IMR-90 (cell line): ENCODE measurements at regions of chr2 and their contacts with region 1.

Region 1: GRCh38 chr2:137838255-137839092 is 125.8 kb upstream of the HNMT start:
- DNase-seq: peak; percentile 49
- ATAC-seq: peak; percentile 83
- H3K4me3 ChIP-seq: no peak overlapping the region
- H3K27ac ChIP-seq: no peak overlapping the region
- H3K4me1 ChIP-seq: no peaks in the 10 kb centered on the region
- H3K27me3 ChIP-seq: no peaks in the 10 kb centered on the region
- CTCF ChIP-seq: peak; percentile 69
- POLR2A ChIP-seq: no peak
- RAD21 ChIP-seq: peak; percentile 81

Region 2: GRCh38 chr2:136423516-136423996 is 1414.9 kb before region 1 on chr2:
- CTCF ChIA-PET with region 1: no interaction called
- POLR2A ChIA-PET with region 1: no interaction called
- dilution Hi-C with region 1: no loop called
- in situ Hi-C with region 1: loop called (anchors 5 kb)
- intact Hi-C with region 1: loop called (anchors 1 kb)
- DNase-seq: peak; percentile 47
- ATAC-seq: peak; percentile 100
- H3K4me3 ChIP-seq: peak overlapping the region; percentile 58
- H3K27ac ChIP-seq: no peak overlapping the region
- H3K4me1 ChIP-seq: no peaks in the 10 kb centered on the region
- H3K27me3 ChIP-seq: no peaks in the 10 kb centered on the region; the same call in 1 of the 2 replicates
- CTCF ChIP-seq: peak; percentile 73
- POLR2A ChIP-seq: no peak
- RAD21 ChIP-seq: peak; percentile 56

Region 3: GRCh38 chr2:137467246-137467862 is 371.1 kb before region 1 on chr2:
- CTCF ChIA-PET with region 1: no interaction called
- POLR2A ChIA-PET with region 1: no interaction called
- dilution Hi-C with region 1: no loop called
- in situ Hi-C with region 1: no loop called
- intact Hi-C with region 1: loop called (anchors 5 kb)
- DNase-seq: no peak
- ATAC-seq: no peak
- H3K4me3 ChIP-seq: no peak overlapping the region
- H3K27ac ChIP-seq: no peak overlapping the region
- H3K4me1 ChIP-seq: no peaks in the 10 kb centered on the region
- H3K27me3 ChIP-seq: no peaks in the 10 kb centered on the region
- CTCF ChIP-seq: no peak
- POLR2A ChIP-seq: no peak
- RAD21 ChIP-seq: no peak

Region 4: DNA sequence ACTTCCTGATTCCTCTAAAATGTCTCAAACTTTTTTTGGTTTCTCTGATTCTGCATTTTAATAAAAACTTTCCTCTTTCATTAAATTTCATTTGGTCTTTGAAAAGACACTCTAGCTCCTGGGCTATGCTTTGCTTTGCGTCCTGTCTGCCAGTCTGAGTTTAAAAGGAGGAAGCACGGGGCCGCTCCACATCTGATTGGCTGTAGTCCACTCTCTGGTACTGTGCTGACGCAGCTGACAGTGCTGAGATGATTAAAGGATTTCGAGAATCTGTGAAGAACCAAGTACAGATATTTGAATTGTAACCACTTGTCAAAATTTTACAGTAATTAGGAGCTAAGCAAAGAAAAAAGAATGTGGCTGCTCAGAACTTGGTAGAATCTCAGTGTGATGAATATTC is 73.8 kb before region 1 on chr2:
- CTCF ChIA-PET with region 1: no interaction called
- POLR2A ChIA-PET with region 1: no interaction called
- dilution Hi-C with region 1: no loop called
- in situ Hi-C with region 1: no loop called
- intact Hi-C with region 1: no loop called
- DNase-seq: no peak
- ATAC-seq: no peak
- H3K4me3 ChIP-seq: no peak overlapping the region
- H3K27ac ChIP-seq: no peak overlapping the region
- H3K4me1 ChIP-seq: no peaks in the 10 kb centered on the region
- H3K27me3 ChIP-seq: no peaks in the 10 kb centered on the region
- CTCF ChIP-seq: no peak
- POLR2A ChIP-seq: no peak
- RAD21 ChIP-seq: no peak